Activated CD4-positive, alpha-beta T cell treated with anti-CD3 and anti-CD28 coated beads, Interleukin-2, amount 10 ng/mL, durations not matched to agents 24 days and 14 days (primary cell): ENCODE measurements at regions of chr19 and their contacts with region 1.

Region 1: DNA sequence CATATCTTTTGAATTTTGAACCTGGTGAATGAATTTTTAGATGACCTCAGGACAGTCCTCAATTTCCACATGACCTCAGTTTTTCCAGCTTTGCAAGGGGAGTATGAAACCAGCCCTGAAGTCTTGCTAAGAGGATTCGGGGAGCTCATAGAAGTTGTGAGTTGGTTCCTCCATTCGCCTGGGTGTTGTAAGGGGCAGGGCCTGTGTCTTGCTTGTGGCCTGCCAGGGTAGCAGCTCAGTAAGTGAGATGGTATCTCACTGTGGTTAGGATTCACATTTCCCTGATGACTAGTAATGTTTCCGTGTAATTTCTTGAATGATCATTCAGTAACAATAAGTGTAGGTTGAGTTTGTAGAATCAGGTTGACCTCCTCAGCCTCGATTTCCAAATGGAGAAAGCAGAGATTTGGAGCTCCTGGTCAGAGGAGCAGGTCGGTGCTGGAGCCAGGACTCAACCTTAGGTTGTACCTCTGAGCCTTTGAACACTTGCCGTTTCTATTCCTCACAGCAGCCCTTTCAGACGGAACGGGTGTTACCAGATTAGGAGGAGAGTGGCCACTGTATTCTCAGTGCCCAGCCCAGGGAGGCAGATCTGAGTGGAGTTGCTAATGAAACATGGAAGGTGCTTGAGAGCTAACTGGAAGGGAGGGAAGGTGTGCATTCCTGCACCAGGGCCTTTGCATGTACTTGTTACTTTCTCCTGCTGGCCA is 14.6 kb downstream of the NACC1 start:
- DNase-seq: peak; percentile 85
- H3K4me3 Mint-ChIP-seq: peak overlapping the region; percentile 85
- H3K27ac Mint-ChIP-seq: peak overlapping the region; percentile 98
- H3K4me1 Mint-ChIP-seq: peaks cover 38% of the 10 kb centered on the region
- H3K27me3 Mint-ChIP-seq: no peaks in the 10 kb centered on the region

Region 2: GRCh38 chr19:13099073-13099999 is 33.3 kb before region 1 on chr19:
- intact Hi-C with region 1: loop called (anchors 1 kb)
- DNase-seq: peak; percentile 94
- H3K4me3 Mint-ChIP-seq: peak overlapping the region; percentile 80
- H3K27ac Mint-ChIP-seq: peak overlapping the region; percentile 92
- H3K4me1 Mint-ChIP-seq: peaks cover 47% of the 10 kb centered on the region
- H3K27me3 Mint-ChIP-seq: peaks cover 24% of the 10 kb centered on the region

Region 3: GRCh38 chr19:13117772-13118423 is 14.7 kb before region 1 on chr19 and contains the start of gene NACC1:
- intact Hi-C with region 1: loop called (anchors 1 kb)
- DNase-seq: peak; percentile 98
- H3K4me3 Mint-ChIP-seq: peak within 1 kb of the TSS; percentile 97
- H3K27ac Mint-ChIP-seq: peak within 1 kb of the TSS; percentile 97
- H3K4me1 Mint-ChIP-seq: peaks cover 39% of the 10 kb centered on the region
- H3K27me3 Mint-ChIP-seq: no peaks in the 10 kb centered on the region
- total RNA-seq, gene NACC1: 118 and 121 TPM in 2 replicates

Region 4: GRCh38 chr19:13155472-13156359 is 23.1 kb after region 1 on chr19:
- intact Hi-C with region 1: loop called (anchors 1 kb)
- DNase-seq: peak; percentile 95
- H3K4me3 Mint-ChIP-seq: peak overlapping the region; percentile 100
- H3K27ac Mint-ChIP-seq: peak overlapping the region; percentile 99
- H3K4me1 Mint-ChIP-seq: peaks cover 44% of the 10 kb centered on the region
- H3K27me3 Mint-ChIP-seq: peaks cover 2% of the 10 kb centered on the region